Activated CD4-positive, alpha-beta memory T cell treated with anti-CD3 and anti-CD28 coated beads for 36 hours (primary cell): ENCODE measurements at regions of chr9 and their contacts with region 1.

Region 1: GRCh38 chr9:34646211-34647083 is at the start of gene GALT:
- DNase-seq: peak; percentile 99
- H3K4me3 Mint-ChIP-seq: peak within 1 kb of the TSS; percentile 86
- H3K27ac Mint-ChIP-seq: peak within 1 kb of the TSS; percentile 84
- H3K4me1 Mint-ChIP-seq: peaks cover 28% of the 10 kb centered on the region
- H3K27me3 Mint-ChIP-seq: no peaks in the 10 kb centered on the region
- total RNA-seq, gene GALT: 56.0 to 59.2 TPM

Region 2: GRCh38 chr9:34611829-34612630 is 34.4 kb before region 1 on chr9 and contains the start of gene RPP25L:
- CTCF ChIA-PET with region 1: interaction called, 5 read pairs
- POLR2A ChIA-PET with region 1: no interaction called
- intact Hi-C with region 1: loop called (anchors 1 kb)
- DNase-seq: peak; percentile 88
- H3K4me3 Mint-ChIP-seq: peak within 1 kb of the TSS; percentile 89
- H3K27ac Mint-ChIP-seq: peak within 1 kb of the TSS; percentile 85
- H3K4me1 Mint-ChIP-seq: peaks cover 21% of the 10 kb centered on the region
- H3K27me3 Mint-ChIP-seq: no peaks in the 10 kb centered on the region
- total RNA-seq, gene RPP25L: 29.3 to 31.1 TPM

Region 3: GRCh38 chr9:34620061-34620994 is 26.1 kb before region 1 on chr9 and contains the start of gene DCTN3:
- CTCF ChIA-PET with region 1: interaction called, 11 read pairs
- POLR2A ChIA-PET with region 1: no interaction called
- intact Hi-C with region 1: no loop called
- DNase-seq: peak; percentile 95
- H3K4me3 Mint-ChIP-seq: peak within 1 kb of the TSS; percentile 93
- H3K27ac Mint-ChIP-seq: peak within 1 kb of the TSS; percentile 52
- H3K4me1 Mint-ChIP-seq: peaks cover 26% of the 10 kb centered on the region
- H3K27me3 Mint-ChIP-seq: peaks cover 25% of the 10 kb centered on the region
- total RNA-seq, gene DCTN3: 85.3 to 87.3 TPM

Region 4: DNA sequence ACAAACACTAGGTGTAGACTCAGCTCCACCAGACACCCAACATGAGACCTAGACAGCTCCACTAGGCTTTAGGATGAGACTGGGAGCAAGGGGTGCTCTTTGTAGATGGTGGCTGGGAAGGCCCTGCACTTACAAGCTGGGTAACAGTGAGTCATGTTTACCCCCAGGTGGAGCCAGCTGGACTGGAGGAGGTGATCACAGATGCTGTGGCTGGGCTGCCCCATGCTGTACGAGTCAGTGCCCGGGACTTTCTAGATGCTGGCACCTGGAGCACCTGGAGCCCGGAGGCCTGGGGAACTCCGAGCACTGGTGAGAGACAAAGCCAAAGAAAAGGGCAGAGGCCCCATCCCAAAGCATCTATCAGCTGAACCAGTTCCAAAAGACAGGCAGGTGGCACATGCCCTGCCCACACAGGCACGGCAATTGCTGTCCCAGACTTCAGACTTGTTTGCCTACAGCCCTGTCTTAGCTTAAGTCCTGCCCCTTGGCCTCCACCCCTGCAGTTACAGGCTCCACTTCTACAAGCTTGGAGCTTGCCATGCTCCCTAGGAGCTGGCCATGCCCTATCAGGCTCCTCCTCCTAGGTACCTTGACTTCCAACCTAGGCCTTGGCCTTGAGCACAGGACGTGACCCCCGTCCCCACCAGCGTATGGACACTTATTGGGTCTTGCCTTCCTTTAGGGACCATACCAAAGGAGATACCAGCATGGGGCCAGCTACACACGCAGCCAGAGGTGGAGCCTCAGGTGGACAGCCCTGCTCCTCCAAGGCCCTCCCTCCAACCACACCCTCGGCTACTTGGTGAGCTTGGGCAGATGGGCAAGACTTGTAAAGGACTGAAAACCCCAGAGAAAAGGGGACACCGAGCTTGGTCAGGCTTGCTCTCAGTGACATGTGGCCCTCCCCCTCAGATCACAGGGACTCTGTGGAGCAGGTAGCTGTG is 13.4 kb after region 1 on chr9:
- CTCF ChIA-PET with region 1: interaction called, 37 read pairs
- POLR2A ChIA-PET with region 1: interaction called, 5 read pairs
- intact Hi-C with region 1: loop called (anchors 1 kb)
- DNase-seq: no peak
- H3K4me3 Mint-ChIP-seq: no peak overlapping the region
- H3K27ac Mint-ChIP-seq: no peak overlapping the region
- H3K4me1 Mint-ChIP-seq: peaks cover 34% of the 10 kb centered on the region
- H3K27me3 Mint-ChIP-seq: no peaks in the 10 kb centered on the region